AG04449 (cell line): ENCODE measurements at regions of chr16 and their contacts with region 1.

Region 1: DNA sequence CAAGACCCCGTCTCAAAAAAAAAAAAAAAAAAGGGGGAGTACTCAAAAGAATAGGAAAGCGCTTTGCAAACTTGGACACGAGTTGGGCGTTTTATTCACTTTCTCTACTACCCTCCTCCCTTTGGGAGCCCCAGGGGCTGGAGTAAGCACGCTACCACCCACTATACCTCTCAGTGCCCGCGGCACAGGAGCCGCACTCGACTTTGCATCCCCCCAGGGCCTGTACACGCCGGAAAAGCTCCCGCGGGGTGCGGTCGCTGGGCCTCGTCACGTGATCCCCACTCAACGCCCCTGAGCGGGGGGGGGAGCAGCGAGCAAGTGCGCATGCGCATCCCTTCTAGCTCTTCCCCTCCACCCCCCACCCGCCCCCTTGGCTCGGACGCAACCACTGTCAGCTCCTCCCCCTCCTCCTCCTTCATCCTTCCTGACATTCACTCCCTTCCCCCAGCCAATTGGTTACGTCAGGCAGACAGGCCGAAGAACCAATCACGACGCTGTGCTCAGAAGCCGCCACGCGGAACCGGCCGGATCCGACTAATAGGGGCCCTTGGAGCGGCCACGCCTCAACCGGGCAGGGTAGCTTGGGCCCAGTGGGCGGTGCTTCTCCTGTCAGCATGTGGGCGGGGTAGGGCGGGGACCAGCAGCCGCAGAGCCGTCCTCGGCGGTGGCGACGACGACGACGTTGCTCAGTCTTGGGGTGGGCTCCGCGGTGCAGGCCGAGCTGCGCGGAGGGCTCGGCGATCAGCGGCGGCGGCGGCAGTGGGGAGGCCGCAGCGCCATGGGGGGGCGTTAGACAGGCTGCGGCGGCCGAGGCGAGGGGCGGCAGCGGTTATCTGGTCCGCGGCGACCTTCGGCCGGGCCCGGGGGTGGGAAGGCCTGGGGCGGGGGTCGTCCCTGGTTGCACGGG is at the start of gene HAPSTR1:
- DNase-seq: peak; percentile 99
- H3K4me3 ChIP-seq: peak within 1 kb of the TSS; percentile 93
- CTCF ChIP-seq: no peak

Region 2: GRCh38 chr16:9047686-9048301 is 43.4 kb before region 1 on chr16:
- CTCF ChIA-PET with region 1: no interaction called
- POLR2A ChIA-PET with region 1: interaction called, 29 read pairs
- DNase-seq: peak; percentile 96
- H3K4me3 ChIP-seq: no peak overlapping the region
- CTCF ChIP-seq: no peak

Region 3: DNA sequence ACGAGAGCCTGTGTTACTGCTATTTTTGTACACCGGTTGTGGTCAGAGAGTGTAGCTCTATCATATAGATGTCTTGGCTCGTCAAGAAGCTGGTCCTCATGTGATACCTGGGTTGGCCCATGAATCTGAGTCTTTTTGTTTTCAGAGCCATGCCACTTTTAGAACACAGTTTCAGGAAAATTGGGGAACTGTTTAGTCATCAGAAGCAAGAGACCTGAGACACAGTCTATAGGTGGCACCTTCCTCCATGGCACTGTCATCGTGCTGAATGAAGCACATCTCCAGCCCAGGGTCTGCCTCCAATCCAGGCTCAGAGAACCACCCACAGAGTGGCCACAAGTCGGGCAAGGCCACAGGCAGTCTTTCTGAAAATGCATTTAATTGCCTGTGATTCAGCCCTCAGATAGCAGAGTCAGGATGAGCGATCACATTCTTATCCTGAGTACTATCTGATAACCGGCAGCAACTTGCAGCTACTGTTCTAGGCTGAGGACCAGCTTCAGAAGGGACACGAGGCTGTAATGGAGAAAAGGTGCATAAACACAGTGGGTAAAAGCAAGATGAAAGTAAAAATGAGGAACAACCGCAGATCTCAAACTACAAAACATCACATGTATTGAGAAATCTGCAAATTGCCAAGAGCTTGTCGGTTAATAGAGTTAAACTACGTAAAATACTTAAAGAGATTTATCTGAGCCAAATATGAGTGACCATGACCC is 14.0 kb before region 1 on chr16:
- CTCF ChIA-PET with region 1: interaction called, 6 read pairs
- POLR2A ChIA-PET with region 1: interaction called, 21 read pairs
- DNase-seq: peak; percentile 69
- H3K4me3 ChIP-seq: no peak overlapping the region
- CTCF ChIP-seq: no peak